ENCODE measurements at regions of chr5 and their contacts with region 1.

Region 1: GRCh38 chr5:97534166-97534565 is 351.1 kb upstream of the RIOK2 start:
- DNase-seq: peak; percentile 78
- H3K4me3 ChIP-seq: no peak overlapping the region
- H3K27me3 ChIP-seq: no peaks in the 10 kb centered on the region
- CTCF ChIP-seq: peak; percentile 77

Region 2: GRCh38 chr5:97231025-97231636 is 303.0 kb before region 1 on chr5:
- CTCF ChIA-PET with region 1: interaction called, 21 read pairs
- POLR2A ChIA-PET with region 1: no interaction called
- DNase-seq: peak; percentile 28
- H3K4me3 ChIP-seq: no peak overlapping the region
- H3K27me3 ChIP-seq: no peaks in the 10 kb centered on the region
- CTCF ChIP-seq: peak; percentile 75

Measured in BJ (cell line).